Activated CD4-positive, alpha-beta T cell treated with anti-CD3 and anti-CD28 coated beads, Interleukin-2, amount 10 ng/mL, durations not matched to agents 24 days and 14 days (primary cell): ENCODE measurements at regions of chr16 and their contacts with region 1.

Region 1: DNA sequence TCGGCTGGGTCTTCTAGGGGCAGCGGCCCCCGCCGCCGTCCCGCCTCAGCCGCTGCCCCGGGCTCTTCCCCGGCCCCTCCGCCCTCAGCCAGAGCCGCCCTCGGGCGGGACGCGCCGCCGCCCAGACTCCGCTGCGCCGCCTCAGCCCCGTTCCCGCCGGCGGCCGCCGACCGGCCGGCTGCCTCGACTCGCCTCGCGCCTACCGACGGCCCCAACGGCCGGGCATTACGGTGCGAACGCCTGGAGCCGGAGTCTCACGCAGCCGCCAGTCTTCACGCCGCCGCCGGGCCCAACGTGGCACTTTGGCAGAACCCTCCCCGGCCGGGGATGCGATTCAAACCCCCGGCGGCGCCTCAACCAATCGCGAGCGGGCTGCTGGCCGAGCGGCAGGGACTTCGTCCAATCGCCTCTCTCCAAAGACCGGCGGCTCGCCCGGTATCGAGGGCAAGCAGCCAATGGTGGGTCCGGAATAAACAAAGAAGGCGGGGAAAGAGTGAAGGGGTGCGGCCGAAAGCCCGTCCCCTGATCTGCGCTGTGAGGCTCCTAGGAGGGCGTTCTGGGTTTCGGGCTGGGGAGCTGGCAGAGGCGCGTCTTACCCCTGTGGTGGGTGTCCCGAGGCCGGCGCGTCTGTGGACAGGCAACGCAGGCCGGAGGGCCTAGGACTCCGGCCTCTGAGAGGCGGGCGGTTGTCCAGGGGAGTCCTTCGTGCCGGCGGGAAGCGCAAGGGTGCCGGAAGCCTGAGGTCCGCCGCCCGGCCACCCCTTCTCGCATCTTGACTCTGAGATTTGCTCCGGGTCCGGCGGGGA is at the start of gene CDR2:
- DNase-seq: peak; percentile 100
- H3K4me3 Mint-ChIP-seq: peak within 1 kb of the TSS; percentile 98
- H3K27ac Mint-ChIP-seq: peak within 1 kb of the TSS; percentile 95
- H3K4me1 Mint-ChIP-seq: peaks cover 39% of the 10 kb centered on the region
- H3K27me3 Mint-ChIP-seq: peaks cover 2% of the 10 kb centered on the region
- total RNA-seq, gene CDR2: 38.2 and 40.9 TPM in 2 replicates

Region 2: GRCh38 chr16:22297114-22297878 is 77.2 kb before region 1 on chr16 and contains the start of gene POLR3E:
- intact Hi-C with region 1: loop called (anchors 1 kb)
- DNase-seq: peak; percentile 100
- H3K4me3 Mint-ChIP-seq: peak within 1 kb of the TSS; percentile 94
- H3K27ac Mint-ChIP-seq: peak within 1 kb of the TSS; percentile 97
- H3K4me1 Mint-ChIP-seq: peaks cover 33% of the 10 kb centered on the region
- H3K27me3 Mint-ChIP-seq: no peaks in the 10 kb centered on the region
- total RNA-seq, gene POLR3E: 102 and 111 TPM in 2 replicates

Region 3: GRCh38 chr16:22321339-22322001 is 53.0 kb before region 1 on chr16:
- intact Hi-C with region 1: loop called (anchors 1 kb)
- DNase-seq: peak; percentile 90
- H3K4me3 Mint-ChIP-seq: no peak overlapping the region
- H3K27ac Mint-ChIP-seq: no peak overlapping the region
- H3K4me1 Mint-ChIP-seq: peaks cover 5% of the 10 kb centered on the region
- H3K27me3 Mint-ChIP-seq: no peaks in the 10 kb centered on the region

Region 4: GRCh38 chr16:22335668-22336246 is 38.8 kb before region 1 on chr16:
- intact Hi-C with region 1: loop called (anchors 5 kb)
- DNase-seq: no peak
- H3K4me3 Mint-ChIP-seq: no peak overlapping the region
- H3K27ac Mint-ChIP-seq: no peak overlapping the region
- H3K4me1 Mint-ChIP-seq: peaks cover 9% of the 10 kb centered on the region
- H3K27me3 Mint-ChIP-seq: no peaks in the 10 kb centered on the region

Region 5: GRCh38 chr16:22353191-22353919 is 21.2 kb before region 1 on chr16:
- intact Hi-C with region 1: loop called (anchors 1 kb)
- DNase-seq: peak; percentile 75
- H3K4me3 Mint-ChIP-seq: peak overlapping the region; percentile 49
- H3K27ac Mint-ChIP-seq: peak overlapping the region; percentile 95
- H3K4me1 Mint-ChIP-seq: peaks cover 43% of the 10 kb centered on the region
- H3K27me3 Mint-ChIP-seq: no peaks in the 10 kb centered on the region

Region 6: DNA sequence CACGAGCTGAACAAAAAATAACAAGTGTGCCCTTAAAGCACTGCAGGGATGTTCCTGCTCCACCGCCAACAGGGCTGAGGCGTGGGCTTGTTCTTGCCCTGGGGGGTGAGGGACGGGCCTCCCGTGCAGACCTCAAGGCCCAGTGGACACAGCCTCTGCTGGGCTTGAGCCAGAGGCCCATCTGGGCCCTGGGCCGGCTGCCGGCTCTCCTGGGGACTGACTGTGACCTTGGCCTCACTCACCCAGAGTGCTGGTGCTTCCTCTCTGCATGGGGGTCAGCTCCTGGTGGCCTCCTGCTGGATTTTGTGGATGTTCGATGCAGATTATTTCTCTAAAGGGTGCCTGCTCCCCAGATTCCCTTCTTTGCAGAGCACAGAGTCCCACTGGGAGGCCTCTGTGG is 54.1 kb after region 1 on chr16:
- intact Hi-C with region 1: no loop called
- DNase-seq: no peak
- H3K4me3 Mint-ChIP-seq: no peak overlapping the region
- H3K27ac Mint-ChIP-seq: peak overlapping the region; percentile 24
- H3K4me1 Mint-ChIP-seq: peaks cover 5% of the 10 kb centered on the region
- H3K27me3 Mint-ChIP-seq: no peaks in the 10 kb centered on the region